ENCODE measurements at regions of chr3 and their contacts with region 1.

Region 1: DNA sequence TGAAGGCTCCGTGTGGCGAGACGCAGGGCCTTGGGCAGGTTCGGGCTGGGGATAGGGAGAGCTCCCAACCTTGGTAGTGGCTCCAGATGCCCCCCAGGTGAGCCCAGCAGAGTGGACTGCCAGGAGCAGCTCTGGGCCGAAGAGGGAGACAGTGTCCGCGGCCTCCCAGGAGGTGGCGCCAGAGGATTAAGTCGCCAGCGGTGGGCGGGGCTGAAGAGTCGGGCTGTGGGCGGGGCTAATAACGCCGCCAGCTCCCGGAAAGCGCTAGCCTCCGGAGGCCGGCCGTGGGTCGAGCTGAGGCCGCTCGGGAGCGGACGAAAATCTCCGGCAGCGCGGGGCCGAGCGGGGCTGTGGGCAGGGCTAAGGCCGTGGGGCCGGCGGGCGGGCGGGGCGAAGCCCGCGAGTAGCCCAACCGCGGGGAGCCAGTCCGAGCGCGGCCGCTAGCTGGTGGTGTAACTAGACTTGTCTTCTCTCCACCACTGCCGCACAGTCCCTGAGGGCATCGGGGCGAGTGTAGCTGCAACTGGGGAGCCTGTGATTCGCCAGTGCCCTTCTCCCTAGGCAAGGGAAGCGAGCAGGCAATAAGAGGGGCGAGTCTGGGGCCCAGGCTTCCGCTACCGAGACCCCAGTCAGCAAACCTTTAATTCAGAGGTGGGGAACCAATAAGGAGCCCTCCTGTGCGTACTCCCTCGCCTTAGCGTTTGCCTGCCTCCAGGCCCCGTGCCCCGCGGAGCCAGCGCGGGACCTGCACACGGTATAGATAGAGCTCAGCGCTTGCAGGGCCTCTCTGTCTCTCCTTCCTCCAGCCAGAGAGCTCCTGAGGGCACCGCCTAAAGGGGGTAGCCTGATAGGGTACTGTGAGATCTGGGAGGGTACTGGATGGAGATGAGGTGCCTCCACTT is 14.4 kb upstream of the BSN start:
- DNase-seq: peak; percentile 98
- ATAC-seq: peak; percentile 98

Region 2: GRCh38 chr3:49165771-49166751 is 373.8 kb before region 1 on chr3 and contains the start of gene CCDC71:
- intact Hi-C with region 1: no loop called
- DNase-seq: peak; percentile 87
- ATAC-seq: peak; percentile 83
- total RNA-seq, gene CCDC71: 20.7 TPM

Region 3: DNA sequence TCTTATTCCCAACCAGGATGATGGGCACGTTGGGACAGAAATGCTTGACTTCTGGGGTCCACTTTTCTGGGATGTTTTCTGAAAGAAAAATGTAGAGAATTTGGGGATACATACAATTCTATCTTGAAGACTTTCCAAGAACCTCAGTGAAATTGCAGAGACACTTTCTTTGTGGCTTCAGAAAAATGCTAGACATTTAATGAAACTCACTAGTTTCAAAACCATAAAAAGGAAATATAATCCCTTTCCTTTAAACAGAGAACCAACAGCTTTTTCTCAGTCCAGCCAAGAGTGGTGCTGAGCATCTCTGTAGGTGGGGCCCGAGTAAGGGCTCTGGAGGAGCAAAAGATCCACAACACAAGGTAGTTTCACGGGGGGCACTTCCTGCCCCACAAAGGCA is 177.4 kb before region 1 on chr3:
- intact Hi-C with region 1: loop called (anchors 5 kb)
- DNase-seq: no peak
- ATAC-seq: no peak

Region 4: GRCh38 chr3:49469936-49470713 is 69.8 kb before region 1 on chr3 and contains the start of gene DAG1:
- intact Hi-C with region 1: loop called (anchors 10 kb)
- DNase-seq: peak; percentile 100
- ATAC-seq: peak; percentile 97
- total RNA-seq, gene DAG1: 165 TPM

Region 5: DNA sequence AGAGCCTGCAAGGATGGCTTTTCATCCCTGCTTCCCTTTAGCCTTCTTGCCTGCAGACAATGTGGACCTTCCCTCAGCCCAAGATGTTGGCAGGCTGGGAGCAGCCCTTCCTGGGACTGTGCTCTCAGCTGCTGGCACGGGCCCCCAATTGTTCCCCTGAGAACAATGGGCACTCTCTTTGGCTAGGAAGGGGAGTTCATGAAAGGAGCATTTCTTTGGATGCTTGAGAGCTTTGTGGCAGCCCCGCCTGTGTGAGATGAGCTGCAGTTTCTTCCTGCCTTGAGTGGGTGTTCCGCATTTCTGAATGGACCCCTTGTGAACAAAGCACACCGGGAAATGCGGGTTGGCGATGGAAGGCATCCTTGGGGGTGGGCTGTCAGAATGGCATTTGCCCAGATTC is 20.6 kb before region 1 on chr3:
- intact Hi-C with region 1: no loop called
- DNase-seq: no peak
- ATAC-seq: peak; percentile 61

Region 6: GRCh38 chr3:49673715-49674496 is 134.0 kb after region 1 on chr3 and contains the start of gene APEH:
- intact Hi-C with region 1: loop called (anchors 5 kb)
- DNase-seq: peak; percentile 97
- ATAC-seq: peak; percentile 97
- total RNA-seq, gene APEH: 51.0 TPM